CD4-positive, alpha-beta T cell (primary cell): ENCODE measurements at regions of chr6 and their contacts with region 1.

Region 1: GRCh38 chr6:30541515-30542403 is 14.5 kb downstream of the GNL1 start:
- DNase-seq: peak; percentile 69 to 93 (median 76)
- ATAC-seq: peak; percentile 68
- H3K4me3 ChIP-seq: peak overlapping the region; percentile 53
- H3K4me3 Mint-ChIP-seq: peak overlapping the region; percentile 86
- H3K27ac ChIP-seq: peak overlapping the region; percentile 52 to 68
- H3K27ac Mint-ChIP-seq: peak overlapping the region; percentile 91
- H3K4me1 ChIP-seq: peaks cover 33% of the 10 kb centered on the region
- H3K4me1 Mint-ChIP-seq: peaks cover 36% of the 10 kb centered on the region
- H3K27me3 ChIP-seq: no peaks in the 10 kb centered on the region
- H3K27me3 Mint-ChIP-seq: no peaks in the 10 kb centered on the region
- CTCF ChIP-seq: peak; percentile 98

Region 2: GRCh38 chr6:30483677-30484279 is 58.0 kb before region 1 on chr6:
- CTCF ChIA-PET with region 1: interaction called, 144 read pairs
- POLR2A ChIA-PET with region 1: interaction called, 21 read pairs
- intact Hi-C with region 1: loop called (anchors 1 kb)
- DNase-seq: peak in 5 of 14 experiments; percentile 17 to 78 (median 68)
- ATAC-seq: no peak
- H3K4me3 ChIP-seq: no peak overlapping the region
- H3K4me3 Mint-ChIP-seq: no peak overlapping the region
- H3K27ac ChIP-seq: no peak overlapping the region
- H3K27ac Mint-ChIP-seq: no peak overlapping the region
- H3K4me1 ChIP-seq: peaks cover 36% of the 10 kb centered on the region
- H3K4me1 Mint-ChIP-seq: peaks cover 44% of the 10 kb centered on the region
- H3K27me3 ChIP-seq: peaks cover 18 to 28% of the 10 kb centered on the region in 2 experiments
- H3K27me3 Mint-ChIP-seq: peaks cover 42% of the 10 kb centered on the region
- CTCF ChIP-seq: peak; percentile 94

Region 3: DNA sequence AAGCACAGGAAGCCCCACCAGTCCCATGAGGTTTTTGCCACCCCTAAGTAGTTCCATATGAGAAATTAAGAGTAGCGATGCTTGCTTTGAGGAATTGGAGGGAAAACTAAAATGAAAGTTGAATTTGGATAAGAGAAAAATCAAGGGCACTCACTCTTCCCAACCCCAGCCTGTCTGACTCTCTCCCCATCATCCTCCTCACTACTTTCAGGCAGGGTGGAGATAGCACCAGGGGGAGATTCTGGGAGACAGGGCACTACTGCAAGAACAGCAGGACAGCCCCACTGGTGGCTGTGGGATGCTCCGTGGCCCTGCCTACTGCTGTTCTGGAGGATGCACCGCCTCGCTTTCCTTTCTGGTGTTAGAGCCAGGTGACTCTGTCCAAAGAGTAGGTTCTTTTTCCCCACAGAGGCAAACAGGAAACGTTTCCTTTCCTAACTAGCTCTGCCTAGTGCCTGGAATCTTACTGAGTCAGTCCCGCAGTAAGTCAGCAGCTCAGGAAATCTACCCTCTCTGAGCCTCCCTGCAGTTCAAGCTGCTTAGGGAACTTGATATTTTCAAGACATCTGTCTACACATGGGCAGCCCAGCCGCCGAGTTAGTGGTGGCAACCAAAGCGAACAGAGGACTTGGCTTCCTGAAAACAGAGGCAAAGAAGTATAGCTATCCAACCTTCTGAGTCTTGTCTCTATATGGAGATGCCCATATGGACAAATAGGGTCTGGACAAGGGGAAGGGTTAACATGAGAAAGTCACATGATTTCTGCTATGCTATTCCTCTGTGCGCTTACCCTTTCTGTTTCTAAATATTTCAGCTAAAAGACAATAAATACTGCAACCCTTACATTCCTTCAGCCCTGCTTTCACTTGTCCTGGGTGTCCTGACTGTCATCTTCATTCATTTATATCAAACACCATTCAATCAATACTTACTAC is 41.1 kb before region 1 on chr6:
- CTCF ChIA-PET with region 1: interaction called, 23 read pairs
- POLR2A ChIA-PET with region 1: interaction called, 120 read pairs
- intact Hi-C with region 1: no loop called
- DNase-seq: peak in 2 of 14 experiments; percentile 37 to 45
- ATAC-seq: peak; percentile 55
- H3K4me3 ChIP-seq: peak overlapping the region; percentile 35
- H3K4me3 Mint-ChIP-seq: peak overlapping the region; percentile 57
- H3K27ac ChIP-seq: peak overlapping the region in 1 of 2 donors; percentile 10
- H3K27ac Mint-ChIP-seq: peak overlapping the region; percentile 75
- H3K4me1 ChIP-seq: peaks cover 29% of the 10 kb centered on the region
- H3K4me1 Mint-ChIP-seq: peaks cover 40% of the 10 kb centered on the region
- H3K27me3 ChIP-seq: no peaks in the 10 kb centered on the region
- H3K27me3 Mint-ChIP-seq: no peaks in the 10 kb centered on the region
- CTCF ChIP-seq: no peak

Region 4: DNA sequence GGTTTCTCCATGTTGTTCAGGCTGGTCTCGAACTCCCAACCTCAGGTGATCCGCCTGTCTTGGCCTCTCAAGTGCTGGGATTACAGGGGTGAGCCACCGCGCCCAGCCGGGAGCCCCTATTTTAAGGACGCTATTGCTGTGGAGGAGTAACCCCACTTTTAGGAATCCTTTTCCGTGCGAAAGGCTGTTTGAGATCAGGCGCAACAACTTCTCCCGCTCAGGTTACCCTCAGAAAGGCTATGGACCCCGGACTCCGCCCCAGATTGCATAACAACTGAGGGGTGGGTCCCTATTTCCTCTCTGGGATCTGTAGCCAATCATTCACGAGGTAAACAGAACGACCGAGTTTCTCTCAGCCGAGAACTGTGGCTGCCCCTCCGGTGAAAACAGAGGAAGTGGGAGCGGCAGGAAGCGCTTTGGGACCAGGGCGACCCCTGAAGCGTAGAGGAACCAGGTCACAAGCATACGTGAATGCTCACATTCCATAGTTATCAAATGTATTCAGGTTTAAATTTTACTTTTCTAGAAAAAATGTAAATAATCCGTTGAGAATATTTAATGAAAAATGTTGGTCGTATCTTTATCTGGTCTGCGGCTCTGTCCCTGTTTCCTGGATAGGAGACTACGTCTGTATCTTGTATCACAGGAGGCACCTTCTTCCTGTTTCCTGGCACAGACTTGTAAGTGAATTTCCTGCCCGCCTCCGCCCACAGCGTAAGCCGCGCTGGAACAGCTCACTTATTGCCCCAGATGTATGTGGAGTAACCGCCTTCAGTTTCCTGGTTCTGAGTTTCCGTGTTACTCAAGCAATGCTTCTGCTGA is 25.6 kb before region 1 on chr6:
- CTCF ChIA-PET with region 1: interaction called, 27 read pairs
- POLR2A ChIA-PET with region 1: interaction called, 38 read pairs
- intact Hi-C with region 1: no loop called
- DNase-seq: peak; percentile 78 to 98 (median 87)
- ATAC-seq: peak; percentile 84
- H3K4me3 ChIP-seq: peak overlapping the region; percentile 55
- H3K4me3 Mint-ChIP-seq: peak overlapping the region; percentile 89
- H3K27ac ChIP-seq: peak overlapping the region; percentile 92 to 98
- H3K27ac Mint-ChIP-seq: peak overlapping the region; percentile 99
- H3K4me1 ChIP-seq: peaks cover 83% of the 10 kb centered on the region
- H3K4me1 Mint-ChIP-seq: peaks cover 69% of the 10 kb centered on the region
- H3K27me3 ChIP-seq: no peaks in the 10 kb centered on the region
- H3K27me3 Mint-ChIP-seq: no peaks in the 10 kb centered on the region
- CTCF ChIP-seq: no peak

Region 5: GRCh38 chr6:30571075-30571768 is 29.5 kb after region 1 on chr6 and contains the start of gene ABCF1:
- CTCF ChIA-PET with region 1: interaction called, 17 read pairs
- POLR2A ChIA-PET with region 1: interaction called, 34 read pairs
- intact Hi-C with region 1: loop called in 1 of 2 experiments (anchors 1 kb)
- DNase-seq: peak; percentile 97 to 100 (median 99)
- ATAC-seq: peak; percentile 90
- H3K4me3 ChIP-seq: peak within 1 kb of the TSS; percentile 82
- H3K4me3 Mint-ChIP-seq: peak within 1 kb of the TSS; percentile 100
- H3K27ac ChIP-seq: peak within 1 kb of the TSS; percentile 94 to 98
- H3K27ac Mint-ChIP-seq: peak within 1 kb of the TSS; percentile 98
- H3K4me1 ChIP-seq: peaks cover 47% of the 10 kb centered on the region
- H3K4me1 Mint-ChIP-seq: peaks cover 56% of the 10 kb centered on the region
- H3K27me3 ChIP-seq: no peaks in the 10 kb centered on the region
- H3K27me3 Mint-ChIP-seq: no peaks in the 10 kb centered on the region
- CTCF ChIP-seq: no peak
- total RNA-seq, gene ABCF1: 86.1 to 88.0 TPM

Region 6: DNA sequence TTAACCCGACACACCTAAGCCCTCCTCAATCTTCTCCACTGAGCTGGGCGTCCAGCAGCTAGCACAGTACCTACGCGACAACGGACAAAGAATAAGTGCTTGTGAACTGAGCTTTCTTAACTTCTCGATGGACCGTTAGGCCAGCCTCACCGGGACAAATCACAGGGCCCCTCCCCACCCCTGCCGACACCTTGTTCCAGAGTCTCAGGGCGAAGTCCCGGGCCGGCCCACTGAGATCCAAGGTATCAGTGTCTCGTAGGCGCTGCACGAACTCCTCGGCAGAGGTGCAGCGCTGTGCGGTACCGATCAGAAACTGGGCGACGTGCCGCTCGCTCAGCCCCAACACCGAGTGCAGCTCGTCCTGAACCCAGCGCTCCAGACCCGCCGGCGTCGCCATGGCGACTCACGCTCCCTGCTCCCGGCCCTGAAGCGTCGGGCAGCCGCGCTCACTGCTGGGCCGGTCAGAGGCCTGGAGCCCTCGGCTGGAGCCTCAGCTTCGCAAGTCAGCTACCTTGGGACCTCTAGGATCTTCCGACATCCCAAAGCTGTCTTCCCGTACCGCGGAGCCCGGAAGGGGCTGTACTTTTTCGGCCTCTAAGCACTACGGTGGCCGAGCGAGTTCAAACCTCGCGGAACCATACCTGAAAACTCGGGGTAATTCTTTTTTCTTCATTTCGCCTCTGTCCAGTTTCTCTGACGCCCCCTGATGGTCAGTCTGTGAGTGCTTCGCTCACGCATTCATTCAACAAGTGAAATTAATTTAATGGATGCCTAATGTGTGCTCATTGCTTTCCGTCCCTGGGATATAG is 130.9 kb after region 1 on chr6 and contains the start of gene DHX16:
- CTCF ChIA-PET with region 1: interaction called, 5 read pairs
- POLR2A ChIA-PET with region 1: interaction called, 13 read pairs
- intact Hi-C with region 1: loop called in 1 of 2 experiments (anchors 5 kb)
- DNase-seq: peak; percentile 79 to 95 (median 84)
- ATAC-seq: peak; percentile 76
- H3K4me3 ChIP-seq: peak within 1 kb of the TSS; percentile 98
- H3K4me3 Mint-ChIP-seq: peak within 1 kb of the TSS; percentile 87
- H3K27ac ChIP-seq: peak within 1 kb of the TSS; percentile 49 to 59
- H3K27ac Mint-ChIP-seq: peak within 1 kb of the TSS; percentile 86
- H3K4me1 ChIP-seq: peaks cover 18% of the 10 kb centered on the region
- H3K4me1 Mint-ChIP-seq: peaks cover 49% of the 10 kb centered on the region
- H3K27me3 ChIP-seq: no peaks in the 10 kb centered on the region
- H3K27me3 Mint-ChIP-seq: no peaks in the 10 kb centered on the region
- CTCF ChIP-seq: peak; percentile 69
- total RNA-seq, gene DHX16: 15.9 to 16.1 TPM

Region 7: GRCh38 chr6:30730601-30731435 is 189.1 kb after region 1 on chr6:
- CTCF ChIA-PET with region 1: interaction called, 8 read pairs
- POLR2A ChIA-PET with region 1: interaction called, 10 read pairs
- intact Hi-C with region 1: loop called in 1 of 2 experiments (anchors 1 kb)
- DNase-seq: peak; percentile 74 to 92 (median 84)
- ATAC-seq: peak; percentile 99
- H3K4me3 ChIP-seq: peak overlapping the region; percentile 25
- H3K4me3 Mint-ChIP-seq: peak overlapping the region; percentile 50
- H3K27ac ChIP-seq: peak overlapping the region in 1 of 2 donors; percentile 14
- H3K27ac Mint-ChIP-seq: peak overlapping the region; percentile 67
- H3K4me1 ChIP-seq: peaks cover 36% of the 10 kb centered on the region
- H3K4me1 Mint-ChIP-seq: peaks cover 46% of the 10 kb centered on the region
- H3K27me3 ChIP-seq: no peaks in the 10 kb centered on the region
- H3K27me3 Mint-ChIP-seq: no peaks in the 10 kb centered on the region
- CTCF ChIP-seq: peak; percentile 84